ENCODE measurements at regions of chr15 and their contacts with region 1.

Region 1: GRCh38 chr15:74307827-74308644 is 59.4 kb downstream of the CYP11A1 start:
- DNase-seq: peak; percentile 84
- H3K4me3 ChIP-seq: no peak overlapping the region
- H3K27ac ChIP-seq: no peak overlapping the region
- H3K4me1 ChIP-seq: no peaks in the 10 kb centered on the region
- H3K27me3 ChIP-seq: no peaks in the 10 kb centered on the region; the same call in 1 of the 2 replicates

Region 2: GRCh38 chr15:72492733-72493132 is 1815.3 kb before region 1 on chr15:
- in situ Hi-C with region 1: no loop called
- DNase-seq: peak; percentile 42
- H3K4me3 ChIP-seq: peak overlapping the region; percentile 19; the same call in 1 of the 2 replicates
- H3K27ac ChIP-seq: peak overlapping the region; percentile 62
- H3K4me1 ChIP-seq: peaks cover 55% of the 10 kb centered on the region
- H3K27me3 ChIP-seq: no peaks in the 10 kb centered on the region

Region 3: DNA sequence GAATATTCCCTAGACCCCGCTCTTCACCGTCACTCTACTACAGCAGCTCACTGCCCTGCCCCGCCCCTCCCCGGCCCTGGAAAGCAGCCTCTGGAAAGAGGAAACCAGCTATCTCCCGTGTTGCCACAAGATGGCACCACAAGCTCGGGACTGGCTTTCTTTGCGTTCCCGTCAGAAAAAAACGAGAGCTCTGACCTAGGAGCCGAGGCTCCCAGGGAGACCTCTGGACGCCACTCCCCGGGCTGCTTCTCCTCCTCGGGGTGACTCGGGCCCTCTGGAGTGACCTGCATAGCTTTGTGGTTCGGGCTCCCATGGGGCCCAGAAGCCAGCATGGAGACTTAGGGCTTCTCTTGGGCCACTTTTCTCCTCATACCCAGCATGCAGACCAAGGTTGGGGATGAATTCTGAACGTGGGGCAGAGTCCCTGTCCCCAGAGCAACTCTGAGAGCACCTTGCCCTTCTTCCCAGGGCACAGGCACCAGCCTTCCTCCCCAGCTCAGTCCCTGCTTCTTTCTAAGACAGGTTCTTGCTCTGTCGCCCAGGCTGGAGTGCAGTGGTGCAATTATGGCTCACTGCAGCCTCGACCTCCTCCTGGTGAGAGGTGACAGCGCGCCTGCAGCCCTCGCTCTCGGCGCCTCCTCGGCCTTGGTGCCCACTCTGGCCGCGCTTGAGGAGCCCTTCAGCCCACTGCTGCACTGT is 334.9 kb before region 1 on chr15:
- in situ Hi-C with region 1: loop called (anchors 10 kb)
- DNase-seq: peak; percentile 91
- H3K4me3 ChIP-seq: peak overlapping the region; percentile 43
- H3K27ac ChIP-seq: no peak overlapping the region
- H3K4me1 ChIP-seq: peaks cover 10% of the 10 kb centered on the region; the same call in 1 of the 2 replicates
- H3K27me3 ChIP-seq: no peaks in the 10 kb centered on the region

Region 4: DNA sequence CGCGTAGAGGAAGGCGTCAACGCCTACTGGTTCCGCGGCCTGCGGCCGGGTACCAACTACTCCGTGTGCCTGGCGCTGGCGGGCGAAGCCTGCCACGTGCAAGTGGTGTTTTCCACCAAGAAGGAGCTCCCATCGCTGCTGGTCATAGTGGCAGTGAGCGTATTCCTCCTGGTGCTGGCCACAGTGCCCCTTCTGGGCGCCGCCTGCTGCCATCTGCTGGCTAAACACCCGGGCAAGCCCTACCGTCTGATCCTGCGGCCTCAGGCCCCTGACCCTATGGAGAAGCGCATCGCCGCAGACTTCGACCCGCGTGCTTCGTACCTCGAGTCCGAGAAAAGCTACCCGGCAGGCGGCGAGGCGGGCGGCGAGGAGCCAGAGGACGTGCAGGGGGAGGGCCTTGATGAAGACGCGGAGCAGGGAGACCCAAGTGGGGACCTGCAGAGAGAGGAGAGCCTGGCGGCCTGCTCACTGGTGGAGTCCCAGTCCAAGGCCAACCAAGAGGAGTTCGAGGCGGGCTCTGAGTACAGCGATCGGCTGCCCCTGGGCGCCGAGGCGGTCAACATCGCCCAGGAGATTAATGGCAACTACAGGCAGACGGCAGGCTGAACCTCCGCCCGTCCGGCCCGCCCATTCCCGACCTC is 173.5 kb before region 1 on chr15:
- in situ Hi-C with region 1: loop called (anchors 5 kb)
- DNase-seq: peak; percentile 74
- H3K4me3 ChIP-seq: no peak overlapping the region
- H3K27ac ChIP-seq: no peak overlapping the region
- H3K4me1 ChIP-seq: peaks cover 10% of the 10 kb centered on the region; the same call in 1 of the 2 replicates
- H3K27me3 ChIP-seq: peaks cover 46% of the 10 kb centered on the region

Region 5: GRCh38 chr15:74365611-74366440 is 57.8 kb after region 1 on chr15:
- in situ Hi-C with region 1: no loop called
- DNase-seq: peak; percentile 88
- H3K4me3 ChIP-seq: peak overlapping the region; percentile 75
- H3K27ac ChIP-seq: no peak overlapping the region
- H3K4me1 ChIP-seq: 0 out of 2 replicates have a peak, but pooled peaks cover 3% of the 10 kb centered on the region
- H3K27me3 ChIP-seq: no peaks in the 10 kb centered on the region

Region 6: DNA sequence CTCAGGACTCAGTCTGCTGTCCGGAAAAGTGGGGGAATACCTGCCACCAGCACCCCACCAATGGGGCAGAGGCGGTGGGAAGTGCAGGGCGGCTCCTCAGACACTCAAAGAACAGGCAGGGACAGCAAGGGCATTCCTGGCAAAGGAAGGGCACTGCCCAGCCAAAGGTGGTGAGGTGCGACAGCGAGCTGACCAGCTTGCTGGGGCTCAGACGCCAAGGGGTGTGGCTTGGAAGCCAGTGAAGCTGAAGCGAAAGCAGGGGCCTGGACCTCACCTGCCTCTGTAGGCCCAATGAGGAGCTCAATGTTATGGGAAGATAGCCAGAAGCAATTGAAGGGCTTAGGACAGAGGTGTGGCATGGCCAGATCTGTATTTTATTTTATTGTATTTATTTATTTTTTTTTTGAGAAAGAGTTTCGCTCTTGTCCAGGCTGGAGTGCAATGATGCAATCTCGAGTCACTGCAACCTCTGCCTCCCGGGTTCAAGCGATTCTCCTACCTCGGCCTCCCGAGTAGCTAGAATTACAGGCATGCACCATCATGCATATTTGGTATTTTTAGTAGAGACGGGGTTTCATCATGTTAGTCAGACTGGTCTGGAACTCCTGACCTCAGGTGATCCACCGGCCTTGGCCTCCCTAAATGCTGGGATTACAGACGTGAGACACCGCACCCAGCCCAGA is 500.2 kb after region 1 on chr15:
- in situ Hi-C with region 1: no loop called
- DNase-seq: no peak
- H3K4me3 ChIP-seq: no peak overlapping the region
- H3K27ac ChIP-seq: no peak overlapping the region
- H3K4me1 ChIP-seq: no peaks in the 10 kb centered on the region
- H3K27me3 ChIP-seq: no peaks in the 10 kb centered on the region

Measured in GM23248 (cell line).